ENCODE measurements at regions of chr10 and their contacts with region 1.

Region 1: DNA sequence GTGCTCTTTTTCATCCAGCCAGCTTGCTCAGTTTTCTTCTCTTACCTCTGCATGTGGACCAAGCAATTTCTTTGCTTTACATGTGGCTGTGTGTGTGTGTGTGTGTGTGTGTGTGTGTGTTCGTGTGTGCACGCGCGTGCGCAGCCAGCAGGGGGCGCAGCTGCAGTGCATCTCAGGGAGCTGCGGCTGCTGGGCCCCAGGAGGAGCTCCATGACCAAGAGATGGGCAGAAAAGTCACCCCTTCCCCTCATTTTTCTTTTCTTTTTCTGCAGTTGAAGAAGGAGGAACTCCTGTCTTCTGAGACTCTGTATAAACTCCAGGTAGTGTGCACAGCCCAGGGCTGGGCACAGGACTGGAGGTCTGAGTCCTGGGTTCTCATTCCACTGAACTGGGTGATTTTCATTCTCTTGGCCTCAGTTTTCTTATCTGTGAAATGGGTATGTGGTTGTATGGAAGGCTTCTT is 41.8 kb downstream of the BLNK start:
- DNase-seq: peak; percentile 89
- H3K4me3 Mint-ChIP-seq: no peak overlapping the region
- H3K27ac Mint-ChIP-seq: no peak overlapping the region
- H3K4me1 Mint-ChIP-seq: no peaks in the 10 kb centered on the region
- H3K27me3 Mint-ChIP-seq: no peaks in the 10 kb centered on the region

Region 2: DNA sequence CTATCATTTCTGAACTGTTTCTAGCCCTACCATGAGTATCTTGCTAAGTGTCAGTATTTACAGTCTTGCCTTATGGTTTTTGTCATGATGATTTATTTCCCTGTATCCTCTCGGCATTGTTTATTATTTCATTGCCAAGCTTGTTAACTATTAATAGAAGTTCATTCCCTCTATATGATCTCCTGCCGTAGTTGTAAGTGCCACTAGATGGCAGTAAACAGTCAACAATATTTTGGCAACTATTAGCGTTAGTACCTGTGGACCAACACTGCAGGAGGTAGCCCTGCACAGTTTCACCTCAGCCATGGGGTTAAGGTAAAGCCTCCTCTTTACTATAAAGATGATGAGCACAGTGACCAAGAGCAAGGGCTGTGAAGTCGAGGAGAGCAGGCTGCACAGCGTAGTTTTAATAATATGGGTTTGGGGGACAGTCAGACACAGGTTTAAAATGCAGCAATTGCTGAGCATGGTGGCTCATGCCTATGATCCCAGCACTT is 212.4 kb before region 1 on chr10:
- intact Hi-C with region 1: loop called (anchors 10 kb)
- DNase-seq: peak; percentile 85
- H3K4me3 Mint-ChIP-seq: no peak overlapping the region
- H3K27ac Mint-ChIP-seq: no peak overlapping the region
- H3K4me1 Mint-ChIP-seq: peaks cover 2% of the 10 kb centered on the region
- H3K27me3 Mint-ChIP-seq: peaks cover 11% of the 10 kb centered on the region

Region 3: DNA sequence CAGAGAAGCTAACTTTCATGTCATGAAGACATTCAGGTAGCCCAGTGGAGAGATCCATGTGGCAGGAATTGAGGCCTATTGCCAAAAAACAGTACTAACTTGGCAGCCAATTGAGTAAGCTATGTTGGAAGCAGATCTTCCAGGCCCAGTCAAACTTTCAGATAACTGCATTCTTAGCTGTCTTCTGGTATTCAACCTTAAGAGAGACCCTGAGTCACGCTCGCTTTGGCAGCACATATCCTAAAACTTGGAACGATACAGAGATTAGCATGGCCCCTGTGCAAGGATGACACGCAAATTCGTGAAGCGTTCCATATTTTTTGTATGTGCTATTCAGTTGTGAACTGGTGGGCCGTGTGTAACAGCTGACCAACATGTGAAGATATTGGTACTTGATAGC is 117.1 kb before region 1 on chr10:
- intact Hi-C with region 1: no loop called
- DNase-seq: no peak
- H3K4me3 Mint-ChIP-seq: no peak overlapping the region
- H3K27ac Mint-ChIP-seq: no peak overlapping the region
- H3K4me1 Mint-ChIP-seq: peaks cover 5% of the 10 kb centered on the region
- H3K27me3 Mint-ChIP-seq: peaks cover 70% of the 10 kb centered on the region

Region 4: DNA sequence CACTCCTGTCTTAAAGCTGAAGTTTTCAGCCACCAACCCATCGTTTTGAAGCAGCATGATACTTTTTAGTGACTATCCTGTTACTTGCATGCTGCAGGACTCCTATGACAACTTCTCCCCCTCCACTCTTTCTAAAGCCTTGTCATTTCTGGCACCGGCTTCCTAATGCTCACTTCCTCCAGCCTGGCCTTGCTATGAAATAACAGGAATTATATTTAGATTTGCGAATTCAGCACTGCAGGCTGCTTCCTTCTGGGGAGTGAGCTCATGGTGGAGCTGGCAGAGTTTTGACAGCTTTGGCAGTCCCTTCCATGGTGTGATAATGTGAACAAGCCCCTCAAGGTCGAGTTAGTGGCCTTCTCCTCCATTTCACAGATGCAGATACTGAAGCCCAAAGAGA is 28.3 kb after region 1 on chr10:
- intact Hi-C with region 1: no loop called
- DNase-seq: no peak
- H3K4me3 Mint-ChIP-seq: no peak overlapping the region
- H3K27ac Mint-ChIP-seq: no peak overlapping the region
- H3K4me1 Mint-ChIP-seq: no peaks in the 10 kb centered on the region
- H3K27me3 Mint-ChIP-seq: peaks cover 2% of the 10 kb centered on the region

Region 5: GRCh38 chr10:96292971-96293920 is 63.6 kb after region 1 on chr10:
- intact Hi-C with region 1: loop called (anchors 5 kb)
- DNase-seq: peak; percentile 69
- H3K4me3 Mint-ChIP-seq: no peak overlapping the region
- H3K27ac Mint-ChIP-seq: no peak overlapping the region
- H3K4me1 Mint-ChIP-seq: peaks cover 10% of the 10 kb centered on the region
- H3K27me3 Mint-ChIP-seq: peaks cover 2% of the 10 kb centered on the region

Region 6: DNA sequence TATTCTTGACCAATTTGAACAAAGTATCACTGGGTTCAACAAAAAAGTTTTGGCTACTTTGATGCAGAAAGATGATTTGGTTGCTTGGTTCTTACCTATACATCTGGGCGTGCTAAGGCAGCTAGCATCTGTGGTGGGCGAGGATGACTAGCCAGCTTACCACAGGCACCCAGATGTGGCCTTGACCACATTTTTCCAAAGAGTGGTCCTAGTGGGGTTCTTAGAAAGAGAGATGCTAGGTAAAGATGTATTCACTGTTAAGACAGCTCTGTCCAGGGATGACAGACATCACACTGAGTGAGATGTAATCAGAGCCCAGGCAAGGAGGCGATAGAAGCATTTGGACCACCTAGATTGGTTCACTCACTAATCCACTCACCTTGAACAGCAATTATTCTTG is 75.4 kb after region 1 on chr10:
- intact Hi-C with region 1: no loop called
- DNase-seq: no peak
- H3K4me3 Mint-ChIP-seq: no peak overlapping the region
- H3K27ac Mint-ChIP-seq: no peak overlapping the region
- H3K4me1 Mint-ChIP-seq: peaks cover 2% of the 10 kb centered on the region
- H3K27me3 Mint-ChIP-seq: peaks cover 22% of the 10 kb centered on the region

Region 7: DNA sequence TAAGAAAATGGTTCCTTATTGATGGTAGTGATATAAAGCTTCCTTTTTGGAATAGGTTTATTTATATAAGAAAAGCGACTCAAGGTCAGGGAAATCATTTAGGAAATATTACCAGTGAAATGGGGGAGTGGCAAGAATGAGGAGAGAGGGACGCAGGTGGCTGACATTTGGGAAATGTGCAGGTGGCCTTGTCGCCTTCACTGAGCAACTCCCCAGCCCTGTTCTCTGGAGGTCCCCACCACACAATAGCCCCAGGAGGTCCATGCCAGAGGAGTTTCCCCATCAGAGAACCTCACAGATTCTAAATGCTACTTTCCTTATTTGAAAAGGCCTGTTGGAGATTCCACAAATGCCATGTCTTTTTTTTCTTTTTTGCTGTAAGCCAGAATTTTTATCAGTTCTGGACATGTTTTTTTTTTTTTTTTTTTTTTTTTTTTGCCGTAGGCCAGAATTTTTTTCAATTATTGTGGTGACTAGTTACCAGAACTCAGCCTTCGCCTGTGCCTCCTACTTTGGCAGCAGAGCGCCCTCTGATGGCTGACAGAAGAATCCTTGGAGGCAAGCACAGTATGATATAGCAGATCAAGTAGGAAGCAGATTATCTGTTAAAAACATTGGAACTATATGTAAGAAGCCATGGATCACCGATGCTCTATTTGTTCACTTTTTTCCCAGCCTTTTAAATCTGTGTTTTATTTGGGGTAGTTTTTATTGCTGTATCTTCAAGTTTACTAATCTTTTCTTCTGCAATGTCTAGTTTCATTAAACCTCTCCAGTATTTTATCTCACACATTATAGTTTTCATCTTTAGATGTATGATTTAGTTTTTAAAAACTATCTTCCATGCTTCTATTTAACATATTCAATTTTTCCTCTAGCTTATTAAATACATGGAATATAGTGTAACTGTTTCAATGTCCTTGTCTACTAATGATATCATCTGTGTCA is 110.6 kb after region 1 on chr10:
- intact Hi-C with region 1: loop called (anchors 1 kb)
- DNase-seq: peak; percentile 85
- H3K4me3 Mint-ChIP-seq: no peak overlapping the region
- H3K27ac Mint-ChIP-seq: no peak overlapping the region
- H3K4me1 Mint-ChIP-seq: no peaks in the 10 kb centered on the region
- H3K27me3 Mint-ChIP-seq: peaks cover 12% of the 10 kb centered on the region